Uterus (tissue), 4 donors: ENCODE measurements at regions of chr7 and their contacts with region 1.

Region 1: DNA sequence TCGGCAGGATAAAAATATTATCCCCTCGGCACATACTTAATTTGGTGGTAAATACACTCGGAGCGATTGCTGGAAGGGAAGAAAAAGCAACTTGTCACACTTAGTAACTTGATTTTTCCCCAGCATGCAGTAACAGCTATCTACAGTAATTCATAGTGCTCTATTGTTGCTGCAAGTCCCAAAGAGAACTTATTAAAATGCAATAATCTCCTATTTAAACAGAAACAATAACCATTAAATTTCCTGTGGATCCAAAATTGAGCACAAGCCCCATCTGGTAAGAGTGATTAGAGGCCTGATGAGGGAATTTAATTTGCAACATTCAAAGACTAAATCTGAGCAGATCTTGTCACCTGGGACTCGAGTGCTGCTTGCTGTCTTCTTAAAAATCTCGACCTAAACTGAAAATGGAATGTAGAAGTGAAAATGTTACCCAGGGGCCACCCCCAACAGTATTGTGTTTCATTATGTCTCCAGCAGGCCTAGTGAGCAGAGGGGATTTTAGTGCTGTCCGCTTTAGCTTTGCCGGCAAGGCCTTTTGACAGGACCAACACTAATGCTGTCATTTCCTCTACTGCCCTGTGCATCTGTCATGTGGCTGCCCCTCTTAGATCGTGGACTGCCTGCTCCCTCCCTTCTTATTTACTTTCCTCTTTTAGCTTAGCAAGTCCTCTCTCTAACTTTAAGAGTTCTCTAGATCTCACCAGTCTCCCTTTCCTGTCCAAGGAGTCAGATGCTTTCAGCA is 639.7 kb downstream of the AUTS2 start:
- DNase-seq: no peak
- H3K4me3 ChIP-seq: no peak overlapping the region
- H3K27ac ChIP-seq: no peak overlapping the region
- H3K4me1 ChIP-seq: no peaks in the 10 kb centered on the region
- H3K27me3 ChIP-seq: no peaks in the 10 kb centered on the region
- CTCF ChIP-seq: no peak
- POLR2A ChIP-seq: no peak

Region 2: GRCh38 chr7:69953136-69954067 is 284.6 kb before region 1 on chr7:
- intact Hi-C with region 1: no loop called
- DNase-seq: no peak
- H3K4me3 ChIP-seq: no peak overlapping the region
- H3K27ac ChIP-seq: no peak overlapping the region
- H3K4me1 ChIP-seq: no peaks in the 10 kb centered on the region
- H3K27me3 ChIP-seq: no peaks in the 10 kb centered on the region
- CTCF ChIP-seq: no peak
- POLR2A ChIP-seq: no peak

Region 3: GRCh38 chr7:71193099-71193810 is 955.3 kb after region 1 on chr7:
- intact Hi-C with region 1: loop called (anchors 5 kb)
- DNase-seq: no peak
- H3K4me3 ChIP-seq: no peak overlapping the region
- H3K27ac ChIP-seq: no peak overlapping the region
- H3K4me1 ChIP-seq: no peaks in the 10 kb centered on the region
- H3K27me3 ChIP-seq: no peaks in the 10 kb centered on the region
- CTCF ChIP-seq: no peak
- POLR2A ChIP-seq: no peak